PC-9 (cell line): ENCODE measurements at regions of chr11 and their contacts with region 1.

Region 1: DNA sequence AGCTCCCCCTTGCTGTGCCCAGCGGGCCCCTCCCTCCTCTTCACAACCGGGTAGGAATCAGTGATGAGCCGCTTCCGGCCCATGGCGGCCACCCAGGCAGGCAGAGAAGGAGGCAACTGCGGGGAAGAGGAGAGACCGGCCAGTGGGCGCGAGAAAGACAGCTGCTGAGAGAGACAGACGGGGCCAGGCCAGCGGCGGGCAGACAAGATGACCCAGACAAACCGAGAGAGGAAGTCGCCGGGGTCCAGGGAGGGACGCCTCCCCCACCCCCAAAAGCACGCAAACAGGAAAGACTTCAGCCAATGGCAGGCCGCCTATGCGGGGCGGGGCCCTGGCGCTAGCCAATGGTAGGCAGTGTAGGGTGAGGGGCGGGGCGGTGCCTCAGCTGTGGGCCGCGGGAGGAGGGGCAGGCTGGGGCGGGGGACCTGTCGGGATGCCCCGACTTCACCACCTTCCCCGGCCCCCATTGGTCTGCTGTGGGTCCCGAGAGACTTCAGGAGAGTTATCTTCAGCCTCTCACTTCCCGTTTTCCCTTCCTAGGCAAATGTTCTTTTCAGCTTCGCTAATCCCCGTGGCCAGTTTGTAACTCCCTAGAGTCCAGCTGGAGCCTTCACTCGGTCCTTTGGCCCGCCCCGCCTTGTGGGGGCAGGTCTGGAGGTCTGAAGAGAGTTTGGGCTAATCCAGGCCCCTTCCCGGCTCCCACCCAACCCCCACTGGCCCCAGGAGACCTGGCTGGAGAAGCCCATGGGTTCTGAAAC is at the start of gene POLD4:
- DNase-seq: peak; percentile 90 to 99
- H3K4me3 ChIP-seq: peak within 1 kb of the TSS; percentile 93
- H3K27ac ChIP-seq: peak within 1 kb of the TSS; percentile 90
- H3K4me1 ChIP-seq: peaks cover 70% of the 10 kb centered on the region
- H3K27me3 ChIP-seq: no peaks in the 10 kb centered on the region
- CTCF ChIP-seq: peak; percentile 24; the same call in 1 of the 2 replicates
- total RNA-seq, gene POLD4: 67.1 and 83.7 TPM in 2 replicates

Region 2: GRCh38 chr11:67332081-67332691 is 21.3 kb before region 1 on chr11:
- CTCF ChIA-PET with region 1: no interaction called
- POLR2A ChIA-PET with region 1: no interaction called
- intact Hi-C with region 1: no loop called
- DNase-seq: peak in 1 of 2 experiments; percentile 45
- H3K4me3 ChIP-seq: no peak overlapping the region
- H3K27ac ChIP-seq: no peak overlapping the region
- H3K4me1 ChIP-seq: no peaks in the 10 kb centered on the region
- H3K27me3 ChIP-seq: no peaks in the 10 kb centered on the region
- CTCF ChIP-seq: no peak

Region 3: DNA sequence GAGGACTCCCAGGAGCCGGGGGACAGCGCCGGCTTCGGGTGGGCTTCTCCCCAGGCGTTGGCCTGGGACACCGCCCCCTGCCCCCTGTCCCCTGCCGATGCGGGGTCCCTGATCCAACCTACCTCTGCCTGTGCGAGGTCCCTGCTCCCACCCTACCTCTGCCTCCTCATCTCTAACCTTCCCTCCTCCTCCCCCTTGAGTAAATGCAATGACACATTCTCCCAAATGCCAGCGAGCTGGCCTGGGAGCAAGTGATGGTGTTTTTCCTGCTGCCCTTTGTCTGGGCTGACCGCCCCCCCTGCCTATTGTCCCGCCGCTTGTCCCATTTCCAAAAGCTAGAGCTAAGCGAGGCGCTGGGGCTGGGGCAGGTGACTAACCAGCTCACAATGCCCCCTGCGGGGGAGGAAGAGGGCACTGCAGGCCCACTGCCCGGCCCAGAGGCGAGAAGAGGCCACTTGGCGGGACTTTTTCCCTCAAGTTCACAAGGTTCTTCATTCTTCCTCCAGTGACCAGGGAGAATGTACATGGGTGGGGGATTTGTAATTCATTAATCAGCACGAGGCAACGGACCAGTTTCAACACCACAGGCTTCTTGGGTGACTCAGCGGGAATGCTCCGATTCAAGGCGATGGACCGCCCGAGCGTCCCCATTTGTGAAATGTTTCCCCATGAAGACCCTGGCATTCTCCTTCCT is 20.6 kb after region 1 on chr11:
- CTCF ChIA-PET with region 1: interaction called, 174 read pairs
- POLR2A ChIA-PET with region 1: interaction called, 48 read pairs
- intact Hi-C with region 1: loop called (anchors 1 kb)
- DNase-seq: peak; percentile 98 to 99
- H3K4me3 ChIP-seq: peak overlapping the region; percentile 87
- H3K27ac ChIP-seq: peak overlapping the region; percentile 99
- H3K4me1 ChIP-seq: peaks cover 59% of the 10 kb centered on the region
- H3K27me3 ChIP-seq: no peaks in the 10 kb centered on the region
- CTCF ChIP-seq: peak; percentile 64

Region 4: DNA sequence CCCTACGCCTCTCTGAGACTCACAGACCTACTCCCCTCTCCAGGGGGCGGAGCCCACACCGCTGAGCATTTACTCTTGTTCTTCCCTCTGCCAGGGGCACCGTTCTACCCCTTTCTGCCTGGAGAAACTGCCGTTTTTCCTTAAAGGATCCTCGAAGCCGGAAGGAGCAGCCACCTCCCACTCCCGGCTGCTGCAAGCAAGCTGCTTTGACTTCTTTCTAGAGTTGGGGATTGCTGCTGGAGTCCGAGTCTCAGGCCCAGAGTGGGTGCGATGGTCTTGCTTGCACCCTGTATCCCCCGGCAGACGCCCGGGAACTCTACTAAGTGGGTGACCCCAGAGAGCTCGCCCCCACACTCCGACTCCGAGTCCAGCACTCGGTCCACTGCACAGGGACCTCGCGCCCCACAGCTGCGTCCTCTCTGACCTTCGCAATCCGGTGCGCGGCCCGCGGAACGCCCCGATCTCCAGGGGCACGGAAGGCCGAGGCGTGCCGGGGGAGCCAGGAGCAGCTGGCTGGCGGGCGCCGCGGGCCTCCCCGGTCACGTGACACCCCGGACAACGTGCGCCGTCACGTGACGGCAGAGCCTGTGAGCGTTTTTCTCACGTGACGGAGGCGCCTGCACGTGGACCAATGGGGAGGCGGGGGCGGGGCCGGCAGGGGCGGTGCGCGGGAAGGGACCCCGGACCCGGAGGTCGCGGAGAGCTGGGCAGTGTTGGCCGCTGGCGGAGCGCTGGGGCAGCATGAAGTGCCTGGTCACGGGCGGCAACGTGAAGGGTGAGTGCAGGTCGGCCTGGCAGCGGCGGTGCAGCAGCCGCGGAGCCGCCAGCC is 38.0 kb after region 1 on chr11 and contains the start of gene RAD9A:
- CTCF ChIA-PET with region 1: interaction called, 28 read pairs
- POLR2A ChIA-PET with region 1: interaction called, 4 read pairs
- intact Hi-C with region 1: no loop called
- DNase-seq: peak; percentile 82 to 94
- H3K4me3 ChIP-seq: peak within 1 kb of the TSS; percentile 89
- H3K27ac ChIP-seq: peak within 1 kb of the TSS; percentile 54
- H3K4me1 ChIP-seq: peaks cover 12% of the 10 kb centered on the region; the same call in 1 of the 2 replicates
- H3K27me3 ChIP-seq: no peaks in the 10 kb centered on the region
- CTCF ChIP-seq: no peak
- total RNA-seq, gene RAD9A: 62.8 and 79.8 TPM in 2 replicates

Region 5: DNA sequence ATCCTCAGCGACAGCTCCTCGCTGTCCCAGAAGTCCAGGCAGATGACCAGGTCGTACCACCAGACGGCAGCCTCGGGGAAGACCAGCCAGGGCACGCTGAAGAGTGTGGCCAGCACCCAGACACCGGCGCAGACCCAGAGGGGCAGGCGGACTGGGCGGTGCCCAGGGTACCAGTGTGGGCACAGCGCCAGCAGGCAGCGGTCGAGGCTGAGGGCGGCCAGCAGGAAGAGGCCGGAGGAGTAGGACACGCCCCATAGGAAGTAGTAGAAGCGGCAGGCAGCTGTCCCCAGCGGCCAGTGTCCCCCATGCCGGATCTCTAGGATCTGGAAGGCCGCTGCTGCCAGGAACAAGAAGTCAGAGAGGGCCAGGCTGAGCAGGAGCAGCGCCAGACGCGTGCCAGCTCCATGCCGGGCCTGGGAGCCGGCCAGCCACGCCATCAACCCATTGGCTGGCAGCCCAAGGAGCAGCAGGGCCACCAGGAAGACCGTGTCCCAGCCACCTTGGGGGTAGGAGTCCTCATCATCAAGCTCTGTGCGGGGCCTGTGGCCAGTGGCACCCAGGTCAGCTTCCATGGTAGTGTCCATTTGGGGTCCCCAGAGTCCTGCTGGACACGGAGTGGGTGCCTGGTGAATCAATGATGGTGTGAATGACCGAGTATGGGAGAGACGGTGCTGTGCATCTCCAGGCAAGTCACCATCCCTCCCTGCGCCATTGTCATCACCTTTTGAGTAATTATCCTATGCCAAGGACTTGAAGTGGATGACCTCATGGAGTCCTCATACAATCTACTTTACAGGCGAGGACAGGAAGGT is 98.9 kb after region 1 on chr11 and contains the start of gene GPR152:
- CTCF ChIA-PET with region 1: no interaction called
- POLR2A ChIA-PET with region 1: no interaction called
- intact Hi-C with region 1: no loop called
- DNase-seq: no peak
- H3K4me3 ChIP-seq: peak within 1 kb of the TSS; percentile 37; the same call in 1 of the 2 replicates
- H3K27ac ChIP-seq: no peak within 1 kb of the TSS
- H3K4me1 ChIP-seq: no peaks in the 10 kb centered on the region
- H3K27me3 ChIP-seq: no peaks in the 10 kb centered on the region
- CTCF ChIP-seq: no peak
- total RNA-seq, gene GPR152: not detected in 2 replicates

Region 6: DNA sequence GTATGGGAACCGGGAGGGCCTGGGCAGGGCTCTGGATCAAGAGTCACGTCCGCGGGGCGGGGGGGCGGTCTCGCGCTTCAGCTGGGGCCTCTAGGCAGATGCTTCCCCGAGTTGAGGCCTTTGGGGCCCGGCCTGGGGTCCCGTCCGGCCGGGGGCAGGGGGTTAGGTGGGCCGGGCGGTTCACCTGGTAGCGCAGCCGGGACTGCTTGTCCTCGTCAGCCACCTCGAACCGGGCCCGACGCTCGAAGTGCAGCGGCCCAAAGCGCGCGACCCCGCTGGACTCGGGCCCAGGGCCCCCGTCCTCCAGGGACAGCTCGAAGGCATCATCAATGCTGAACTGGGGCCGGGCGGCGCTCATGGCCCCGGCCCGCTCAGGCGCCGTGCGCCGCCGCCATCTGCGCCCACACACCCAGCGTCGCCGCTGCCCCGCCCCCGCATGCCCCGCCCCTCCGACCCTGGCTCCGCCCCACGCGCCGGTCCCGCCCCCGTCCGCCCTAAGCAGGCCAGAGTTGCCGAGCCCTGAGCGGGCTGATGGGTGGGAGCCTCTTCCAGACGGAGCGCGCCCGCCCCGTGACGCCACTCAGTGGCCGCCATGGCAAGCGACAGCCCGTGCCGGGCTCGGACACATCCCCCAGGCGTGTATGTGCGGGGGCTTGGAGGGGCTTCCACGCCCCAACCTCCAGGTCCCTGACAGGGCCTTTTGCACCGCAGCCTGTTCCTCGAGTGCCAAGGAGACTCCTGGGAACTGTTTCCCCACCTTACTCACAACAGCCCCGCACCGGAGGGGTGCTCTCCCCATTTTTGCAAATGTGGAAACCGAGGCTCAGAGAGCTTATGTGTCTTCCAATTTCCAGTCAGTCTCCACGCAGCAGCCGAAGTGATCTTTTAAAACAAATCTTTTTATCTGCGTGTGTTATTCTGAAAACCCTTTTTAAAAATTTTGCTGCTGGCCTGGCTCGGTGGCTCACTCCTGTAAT is 115.6 kb after region 1 on chr11 and contains the start of gene TMEM134:
- CTCF ChIA-PET with region 1: interaction called, 4 read pairs
- POLR2A ChIA-PET with region 1: no interaction called
- intact Hi-C with region 1: loop called (anchors 5 kb)
- DNase-seq: peak; percentile 80 to 91
- H3K4me3 ChIP-seq: peak within 1 kb of the TSS; percentile 92
- H3K27ac ChIP-seq: peak within 1 kb of the TSS; percentile 48
- H3K4me1 ChIP-seq: peaks cover 32% of the 10 kb centered on the region
- H3K27me3 ChIP-seq: no peaks in the 10 kb centered on the region
- CTCF ChIP-seq: peak; percentile 48
- total RNA-seq, gene TMEM134: 85.7 and 125 TPM in 2 replicates

Region 7: DNA sequence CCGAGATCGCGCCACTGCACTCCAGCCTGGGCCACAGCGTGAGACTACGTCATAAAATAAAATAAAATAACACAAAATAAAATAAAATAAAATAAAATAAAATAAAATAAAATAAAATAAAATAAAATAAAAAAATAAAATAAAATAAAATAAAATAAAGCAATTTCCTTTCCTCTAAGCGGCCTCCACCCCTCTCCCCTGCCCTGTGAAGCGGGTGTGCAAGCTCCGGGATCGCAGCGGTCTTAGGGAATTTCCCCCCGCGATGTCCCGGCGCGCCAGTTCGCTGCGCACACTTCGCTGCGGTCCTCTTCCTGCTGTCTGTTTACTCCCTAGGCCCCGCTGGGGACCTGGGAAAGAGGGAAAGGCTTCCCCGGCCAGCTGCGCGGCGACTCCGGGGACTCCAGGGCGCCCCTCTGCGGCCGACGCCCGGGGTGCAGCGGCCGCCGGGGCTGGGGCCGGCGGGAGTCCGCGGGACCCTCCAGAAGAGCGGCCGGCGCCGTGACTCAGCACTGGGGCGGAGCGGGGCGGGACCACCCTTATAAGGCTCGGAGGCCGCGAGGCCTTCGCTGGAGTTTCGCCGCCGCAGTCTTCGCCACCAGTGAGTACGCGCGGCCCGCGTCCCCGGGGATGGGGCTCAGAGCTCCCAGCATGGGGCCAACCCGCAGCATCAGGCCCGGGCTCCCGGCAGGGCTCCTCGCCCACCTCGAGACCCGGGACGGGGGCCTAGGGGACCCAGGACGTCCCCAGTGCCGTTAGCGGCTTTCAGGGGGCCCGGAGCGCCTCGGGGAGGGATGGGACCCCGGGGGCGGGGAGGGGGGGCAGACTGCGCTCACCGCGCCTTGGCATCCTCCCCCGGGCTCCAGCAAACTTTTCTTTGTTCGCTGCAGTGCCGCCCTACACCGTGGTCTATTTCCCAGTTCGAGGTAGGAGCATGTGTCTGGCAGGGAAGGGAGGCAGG is 230.0 kb after region 1 on chr11 and contains the start of gene GSTP1:
- CTCF ChIA-PET with region 1: interaction called, 6 read pairs
- POLR2A ChIA-PET with region 1: no interaction called
- intact Hi-C with region 1: loop called (anchors 2 kb)
- DNase-seq: peak; percentile 75 to 94
- H3K4me3 ChIP-seq: peak within 1 kb of the TSS; percentile 82
- H3K27ac ChIP-seq: peak within 1 kb of the TSS; percentile 69
- H3K4me1 ChIP-seq: peaks cover 52% of the 10 kb centered on the region
- H3K27me3 ChIP-seq: no peaks in the 10 kb centered on the region
- CTCF ChIP-seq: peak; percentile 78
- total RNA-seq, gene GSTP1: 2,063 and 2,645 TPM in 2 replicates